ENCODE measurements at regions of chr12 and their contacts with region 1.

Region 1: DNA sequence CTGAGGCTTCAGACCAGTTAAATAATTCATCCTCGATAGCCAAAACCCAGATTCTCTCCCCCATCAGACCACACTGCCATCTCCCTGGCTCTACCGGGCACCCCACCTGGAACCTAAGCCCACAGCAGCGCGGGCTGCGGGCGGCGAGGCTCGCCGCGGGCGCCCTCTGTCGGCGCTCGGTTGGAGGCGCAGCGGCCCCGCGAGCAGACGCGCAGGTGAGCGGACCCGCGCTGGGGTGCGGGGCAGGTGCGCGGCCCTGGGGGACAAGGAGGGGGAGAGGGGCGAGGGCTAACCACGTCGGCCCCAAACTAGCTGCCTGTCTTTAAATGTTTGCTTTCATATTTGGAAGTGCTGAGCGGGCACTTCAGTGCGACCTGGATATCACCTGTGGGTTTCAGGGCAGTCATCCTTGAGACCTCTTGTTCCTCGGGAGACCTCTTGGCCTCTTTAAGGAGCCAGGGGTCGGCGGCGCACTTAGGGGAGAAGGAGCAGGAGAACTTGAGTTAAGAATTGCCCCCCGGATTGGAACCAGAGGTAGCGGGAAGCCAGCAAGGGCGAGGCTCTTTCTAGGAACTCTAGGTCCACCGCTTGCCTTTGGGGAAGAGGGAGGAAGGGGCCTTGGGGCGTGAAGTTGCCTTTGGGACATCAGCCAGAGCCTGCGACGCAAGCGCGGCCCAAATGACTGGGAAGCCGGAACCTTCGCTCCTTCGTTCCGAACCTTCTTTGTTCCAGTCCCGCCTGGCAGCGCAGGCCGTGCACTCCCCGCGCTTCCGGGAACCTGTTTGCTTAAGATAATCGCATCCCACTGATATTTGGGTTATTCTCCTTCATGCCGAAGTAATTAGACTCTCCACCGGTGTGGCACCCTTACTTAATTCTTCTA is 78.7 kb downstream of the NEDD1 start:
- DNase-seq: peak; percentile 20
- H3K4me3 Mint-ChIP-seq: peak overlapping the region; percentile 60
- H3K27ac Mint-ChIP-seq: no peak overlapping the region
- H3K4me1 Mint-ChIP-seq: no peaks in the 10 kb centered on the region
- H3K27me3 Mint-ChIP-seq: peaks cover 40% of the 10 kb centered on the region

Region 2: DNA sequence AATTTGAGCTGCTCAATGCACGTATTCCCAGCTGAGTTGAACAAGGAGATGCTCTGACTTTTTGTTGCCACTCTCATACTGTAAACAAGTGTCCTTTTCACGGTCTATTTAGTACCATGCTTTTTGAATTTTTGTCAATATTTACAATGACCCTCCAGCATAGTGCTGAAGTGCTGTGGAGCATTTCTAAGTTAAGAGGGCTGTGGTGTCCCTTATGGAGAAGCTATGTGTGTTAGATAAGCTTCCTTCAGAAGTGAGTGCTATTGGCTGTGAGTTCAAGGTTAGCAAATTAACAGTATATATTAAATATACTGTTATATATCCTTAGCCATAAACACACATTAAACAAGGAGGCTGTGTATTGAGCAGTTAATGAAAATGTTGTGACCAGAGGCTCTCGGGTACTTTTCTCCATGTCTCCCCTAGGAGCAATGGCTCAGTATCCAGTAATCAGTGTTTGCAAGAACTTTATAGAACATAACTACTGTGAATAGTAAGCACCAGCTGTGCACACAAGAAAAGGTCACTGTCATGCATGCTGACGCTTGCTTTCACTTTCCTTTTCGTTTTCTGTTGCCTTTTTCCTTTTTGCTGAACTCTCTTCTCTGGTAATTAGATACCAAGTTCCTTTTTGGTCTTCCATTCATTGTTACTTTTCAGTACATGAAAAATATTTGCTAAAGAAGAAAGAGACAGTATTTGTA is 265.9 kb before region 1 on chr12:
- intact Hi-C with region 1: loop called (anchors 10 kb)
- DNase-seq: peak; percentile 11
- H3K4me3 Mint-ChIP-seq: peak overlapping the region; percentile 87
- H3K27ac Mint-ChIP-seq: peak overlapping the region; percentile 80
- H3K4me1 Mint-ChIP-seq: peaks cover 18% of the 10 kb centered on the region
- H3K27me3 Mint-ChIP-seq: no peaks in the 10 kb centered on the region

Region 3: GRCh38 chr12:96828169-96828789 is 157.4 kb before region 1 on chr12:
- intact Hi-C with region 1: loop called (anchors 5 kb)
- DNase-seq: no peak
- H3K4me3 Mint-ChIP-seq: no peak overlapping the region
- H3K27ac Mint-ChIP-seq: no peak overlapping the region
- H3K4me1 Mint-ChIP-seq: no peaks in the 10 kb centered on the region
- H3K27me3 Mint-ChIP-seq: no peaks in the 10 kb centered on the region

Region 4: DNA sequence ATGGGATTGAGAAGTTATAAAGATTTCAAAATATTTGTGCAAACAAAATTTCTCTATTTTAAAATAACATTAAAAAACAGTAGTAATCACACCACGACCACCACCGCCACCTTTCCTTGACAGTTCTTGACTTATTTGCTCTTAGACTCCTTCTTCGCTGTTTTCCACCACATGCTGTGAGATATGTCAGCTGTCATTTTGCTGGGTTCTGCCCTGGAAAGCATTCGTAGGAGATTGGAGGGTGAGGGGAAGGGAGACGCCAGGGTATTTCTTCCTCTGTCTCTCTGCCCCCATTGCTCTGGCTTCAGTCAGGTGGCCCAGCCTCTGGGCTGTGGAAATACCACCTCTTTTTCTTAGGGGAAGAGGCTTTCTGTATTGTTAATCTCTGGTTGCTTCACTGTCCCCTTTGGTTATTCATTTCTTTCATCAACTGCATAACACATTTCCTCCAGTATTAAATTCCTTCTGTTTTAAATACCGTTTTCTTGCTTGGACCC is 107.5 kb after region 1 on chr12:
- intact Hi-C with region 1: no loop called
- DNase-seq: no peak
- H3K4me3 Mint-ChIP-seq: no peak overlapping the region
- H3K27ac Mint-ChIP-seq: no peak overlapping the region
- H3K4me1 Mint-ChIP-seq: no peaks in the 10 kb centered on the region
- H3K27me3 Mint-ChIP-seq: peaks cover 2% of the 10 kb centered on the region

Region 5: DNA sequence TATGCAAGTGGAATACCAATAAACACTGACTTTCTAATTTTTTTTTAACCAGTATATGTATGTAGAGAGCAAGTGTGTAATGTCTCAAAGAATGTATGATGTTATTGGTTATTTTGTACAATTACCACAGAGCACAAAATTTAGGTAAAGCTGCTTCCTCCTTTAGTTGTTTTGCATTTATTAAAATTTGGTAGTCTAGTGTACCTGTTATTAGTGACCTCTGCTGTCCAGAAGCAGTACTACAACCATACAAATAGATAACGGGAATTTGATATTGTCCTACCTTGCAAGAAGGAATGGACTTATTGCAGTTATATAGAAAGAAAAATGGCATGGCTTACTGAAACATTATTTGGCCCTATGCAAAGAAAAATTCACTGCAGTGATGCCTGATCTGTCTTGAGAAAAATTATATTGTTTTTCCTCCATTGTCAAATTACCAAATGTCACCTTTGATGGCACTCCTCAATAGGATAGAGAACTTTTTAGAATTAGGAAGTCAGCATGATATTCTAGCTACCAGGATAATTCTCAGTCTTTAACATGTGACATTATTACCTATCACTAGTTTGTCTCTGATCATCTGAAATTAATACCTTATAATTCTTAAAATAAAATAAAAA is 323.0 kb after region 1 on chr12:
- intact Hi-C with region 1: loop called (anchors 2 kb)
- DNase-seq: no peak
- H3K4me3 Mint-ChIP-seq: no peak overlapping the region
- H3K27ac Mint-ChIP-seq: no peak overlapping the region
- H3K4me1 Mint-ChIP-seq: no peaks in the 10 kb centered on the region
- H3K27me3 Mint-ChIP-seq: peaks cover 6% of the 10 kb centered on the region